PC-3 (cell line): ENCODE measurements at regions of chr21 and their contacts with region 1.

Region 1: GRCh38 chr21:41460578-41461527 is 34.8 kb downstream of the MX1 start:
- DNase-seq: peak; percentile 73
- ATAC-seq: peak; percentile 90
- H3K4me3 ChIP-seq: no peak overlapping the region
- H3K27ac ChIP-seq: no peak overlapping the region
- H3K4me1 ChIP-seq: 0 out of 2 replicates have a peak, but pooled peaks cover 4% of the 10 kb centered on the region
- H3K27me3 ChIP-seq: no peaks in the 10 kb centered on the region
- CTCF ChIP-seq: peak; percentile 91

Region 2: GRCh38 chr21:41361786-41362604 is 98.9 kb before region 1 on chr21 and contains the start of gene MX2:
- CTCF ChIA-PET with region 1: no interaction called
- POLR2A ChIA-PET with region 1: no interaction called
- intact Hi-C with region 1: loop called (anchors 10 kb)
- DNase-seq: peak; percentile 48
- ATAC-seq: peak; percentile 25
- H3K4me3 ChIP-seq: peak within 1 kb of the TSS; percentile 25; the same call in 1 of the 2 replicates
- H3K27ac ChIP-seq: no peak within 1 kb of the TSS
- H3K4me1 ChIP-seq: peaks cover 9% of the 10 kb centered on the region
- H3K27me3 ChIP-seq: peaks cover 4% of the 10 kb centered on the region
- CTCF ChIP-seq: no peak
- total RNA-seq, gene MX2: 0.15 and 0.46 TPM in 2 replicates

Region 3: DNA sequence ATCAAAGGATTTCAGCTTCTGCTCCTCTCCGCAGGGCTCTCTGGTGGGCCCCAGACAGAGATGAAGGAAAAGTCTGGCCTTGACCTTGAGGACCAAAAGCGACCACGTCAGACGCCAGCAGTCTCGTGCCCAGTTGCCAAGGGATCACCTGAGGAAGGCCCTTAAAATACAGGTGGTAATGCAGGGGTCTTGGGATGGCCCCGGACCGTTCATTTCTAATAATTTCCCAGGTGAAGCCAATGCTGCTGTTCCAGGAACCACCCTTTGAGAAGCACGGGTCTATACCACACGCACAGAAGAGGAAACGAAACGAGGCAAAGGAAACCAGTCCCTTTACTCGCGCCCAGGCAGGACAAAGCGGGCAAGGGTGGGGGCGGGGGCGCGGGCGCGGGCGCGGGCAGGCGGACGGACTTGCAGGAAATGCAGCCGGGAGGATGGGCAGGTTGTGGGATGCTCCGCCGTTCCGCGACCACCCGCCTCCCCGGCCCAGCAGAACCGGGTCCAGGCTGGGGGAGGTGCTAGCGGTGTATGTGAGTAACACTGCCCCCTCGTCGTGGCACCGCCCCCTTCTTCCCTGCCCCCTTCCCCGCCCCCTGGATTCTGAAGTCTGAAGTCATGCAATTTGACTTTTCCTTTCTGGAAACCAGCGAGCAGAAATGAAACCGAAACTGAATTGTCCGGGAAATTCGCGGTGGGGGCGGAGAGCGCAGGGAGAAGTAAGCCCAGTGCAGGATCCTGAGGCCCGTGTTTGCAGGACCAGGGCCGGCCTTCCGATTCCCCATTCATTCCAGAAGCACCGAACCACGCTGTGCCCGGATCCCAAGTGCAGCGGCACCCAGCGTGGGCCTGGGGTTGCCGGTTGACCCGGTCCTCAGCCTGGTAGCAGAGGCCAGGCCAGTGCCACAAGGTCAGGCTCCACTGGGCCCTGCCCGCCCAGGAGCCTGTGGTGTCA is 40.7 kb before region 1 on chr21:
- CTCF ChIA-PET with region 1: no interaction called
- POLR2A ChIA-PET with region 1: no interaction called
- intact Hi-C with region 1: loop called (anchors 2 kb)
- DNase-seq: peak; percentile 89
- ATAC-seq: peak; percentile 90
- H3K4me3 ChIP-seq: peak overlapping the region; percentile 70
- H3K27ac ChIP-seq: peak overlapping the region; percentile 54
- H3K4me1 ChIP-seq: no peaks in the 10 kb centered on the region; the same call in none of the 2 replicates
- H3K27me3 ChIP-seq: no peaks in the 10 kb centered on the region
- CTCF ChIP-seq: no peak

Region 4: GRCh38 chr21:41631564-41632461 is 171.0 kb after region 1 on chr21:
- CTCF ChIA-PET with region 1: no interaction called
- POLR2A ChIA-PET with region 1: no interaction called
- intact Hi-C with region 1: no loop called
- DNase-seq: peak; percentile 96
- ATAC-seq: peak; percentile 35
- H3K4me3 ChIP-seq: peak overlapping the region; percentile 22; the same call in 1 of the 2 replicates
- H3K27ac ChIP-seq: peak overlapping the region; percentile 99
- H3K4me1 ChIP-seq: peaks cover 75% of the 10 kb centered on the region
- H3K27me3 ChIP-seq: no peaks in the 10 kb centered on the region
- CTCF ChIP-seq: no peak